Prostate gland (tissue), 2 donors: ENCODE measurements at regions of chr17 and their contacts with region 1.

Region 1: DNA sequence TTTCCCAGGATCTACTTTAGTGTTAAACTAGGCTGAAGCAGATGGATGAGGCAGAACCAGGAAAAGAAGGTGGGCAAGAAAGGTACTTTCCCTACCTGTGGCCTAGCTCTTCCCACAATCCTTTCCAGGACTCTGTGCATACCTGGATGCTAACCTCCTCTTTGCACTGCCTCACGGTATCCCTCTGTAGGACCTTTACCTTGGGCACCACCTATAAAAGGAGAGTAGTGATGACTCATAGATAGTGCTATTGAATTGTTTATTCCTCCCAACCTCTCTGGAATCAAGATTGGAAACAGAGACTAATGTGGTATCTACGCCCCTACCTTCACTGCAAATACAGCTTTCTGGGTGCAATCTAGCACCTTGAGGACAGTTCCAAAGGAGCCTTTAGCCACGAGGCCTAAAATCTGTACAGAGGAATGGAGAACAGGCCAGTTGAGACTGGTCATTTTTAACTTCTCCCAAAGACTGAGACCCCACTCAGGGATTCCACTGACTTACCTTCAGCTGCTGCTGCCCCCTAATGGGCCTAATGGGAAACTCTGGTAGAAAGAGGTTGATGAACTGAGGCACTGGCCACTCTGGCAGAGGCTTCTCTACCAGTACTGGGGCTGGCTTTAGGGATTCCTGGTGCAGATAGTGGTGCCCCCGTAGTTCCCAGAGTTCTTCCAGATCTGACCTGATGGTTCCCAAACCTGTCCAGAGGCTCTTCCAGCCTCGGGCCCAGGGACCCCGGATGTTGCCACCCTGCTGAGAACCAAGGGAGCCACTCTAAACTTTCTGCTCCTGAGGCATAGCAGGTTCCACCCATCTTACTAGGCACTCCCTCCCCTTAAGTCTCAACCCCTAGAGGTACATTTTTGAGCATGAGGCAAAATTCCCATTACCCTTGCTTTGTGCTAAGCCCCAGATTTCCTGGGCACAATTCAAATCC is 781 bp downstream of the RSKR start:
- DNase-seq: no peak
- H3K4me3 ChIP-seq: no peak overlapping the region
- H3K27ac ChIP-seq: no peak overlapping the region
- H3K4me1 ChIP-seq: no peaks in the 10 kb centered on the region
- H3K27me3 ChIP-seq: no peaks in the 10 kb centered on the region
- CTCF ChIP-seq: peak; percentile 12 to 58 (median 38)
- POLR2A ChIP-seq: no peak

Region 2: GRCh38 chr17:28494445-28495188 is 118.6 kb before region 1 on chr17:
- intact Hi-C with region 1: loop called (anchors 2 kb)
- DNase-seq: peak; percentile 69
- H3K4me3 ChIP-seq: no peak overlapping the region
- H3K27ac ChIP-seq: no peak overlapping the region
- H3K4me1 ChIP-seq: peaks cover 13% of the 10 kb centered on the region
- H3K27me3 ChIP-seq: no peaks in the 10 kb centered on the region
- CTCF ChIP-seq: peak; percentile 85 to 96 (median 94)
- POLR2A ChIP-seq: no peak

Region 3: GRCh38 chr17:28547623-28548416 is 65.4 kb before region 1 on chr17:
- intact Hi-C with region 1: loop called (anchors 5 kb)
- DNase-seq: peak; percentile 47
- H3K4me3 ChIP-seq: no peak overlapping the region
- H3K27ac ChIP-seq: no peak overlapping the region
- H3K4me1 ChIP-seq: no peaks in the 10 kb centered on the region
- H3K27me3 ChIP-seq: no peaks in the 10 kb centered on the region
- CTCF ChIP-seq: peak; percentile 67 to 83 (median 73)
- POLR2A ChIP-seq: no peak